AG04450 (cell line): ENCODE measurements at regions of chr3 and their contacts with region 1.

Region 1: DNA sequence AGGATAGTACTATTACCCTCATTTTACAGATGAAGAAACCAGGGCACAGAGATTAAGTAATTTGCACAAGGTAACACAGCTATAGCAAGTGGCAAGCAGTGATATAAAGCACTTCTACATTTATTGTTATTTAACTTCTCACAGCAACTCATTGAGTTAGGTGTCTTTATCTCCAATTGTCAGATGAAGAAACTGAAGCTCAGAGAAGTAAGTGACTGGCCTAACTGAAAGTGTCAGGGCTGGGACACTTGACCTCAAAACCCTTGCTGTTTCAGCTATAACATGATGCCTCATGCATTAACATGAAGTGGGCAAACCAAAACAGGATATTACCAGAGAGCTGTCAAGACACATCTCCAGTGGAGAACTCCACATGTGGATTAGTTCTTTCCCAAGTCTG is 65.8 kb upstream of the LEKR1 start:
- DNase-seq: no peak
- H3K4me3 ChIP-seq: no peak overlapping the region
- H3K27ac ChIP-seq: no peak overlapping the region
- H3K27me3 ChIP-seq: no peaks in the 10 kb centered on the region
- CTCF ChIP-seq: no peak

Region 2: GRCh38 chr3:156745766-156746165 is 14.6 kb before region 1 on chr3:
- CTCF ChIA-PET with region 1: interaction called, 19 read pairs
- POLR2A ChIA-PET with region 1: interaction called, 10 read pairs
- DNase-seq: no peak
- H3K4me3 ChIP-seq: no peak overlapping the region
- H3K27ac ChIP-seq: no peak overlapping the region
- H3K27me3 ChIP-seq: no peaks in the 10 kb centered on the region
- CTCF ChIP-seq: no peak

Region 3: DNA sequence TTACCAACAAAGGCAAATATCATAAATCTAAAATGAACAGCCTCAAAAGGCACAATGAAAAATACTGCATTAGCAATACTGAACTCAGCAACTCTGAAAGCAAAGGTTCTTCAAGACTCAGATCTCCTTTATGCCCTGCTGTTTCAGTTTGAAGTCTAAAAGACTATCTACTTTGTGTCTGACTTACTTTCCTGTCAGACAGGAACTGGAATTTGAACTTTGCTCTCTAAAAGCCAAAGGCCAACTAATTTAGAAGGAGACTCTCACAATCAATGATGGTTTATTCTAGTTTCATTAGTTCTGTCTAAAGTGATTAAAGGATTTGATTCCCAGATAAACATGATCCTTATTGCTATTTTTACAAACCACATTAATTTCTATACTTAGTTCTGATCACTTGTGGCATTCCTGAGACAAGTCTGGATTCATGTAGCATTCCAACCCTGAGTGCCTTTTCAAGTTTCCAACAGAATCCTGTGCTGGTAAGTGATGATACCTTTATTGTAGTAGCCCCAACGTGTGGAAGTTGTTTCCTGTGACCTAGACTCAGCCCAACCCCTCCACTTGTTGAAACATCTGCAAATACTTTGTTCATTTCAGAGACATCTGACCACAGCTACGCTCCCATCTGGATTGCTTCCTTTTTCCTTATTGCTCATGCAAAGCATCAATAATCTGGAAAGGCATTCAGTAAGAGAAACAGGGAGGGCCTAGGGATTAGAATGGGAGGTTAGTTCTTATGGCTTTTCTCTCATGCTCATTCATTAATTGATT is 50.9 kb after region 1 on chr3:
- CTCF ChIA-PET with region 1: no interaction called
- POLR2A ChIA-PET with region 1: no interaction called
- DNase-seq: no peak
- H3K4me3 ChIP-seq: no peak overlapping the region
- H3K27ac ChIP-seq: no peak overlapping the region
- H3K27me3 ChIP-seq: no peaks in the 10 kb centered on the region
- CTCF ChIP-seq: no peak